GM12878 (cell line): ENCODE measurements at regions of chr12 and their contacts with region 1.

Region 1: GRCh38 chr12:53287741-53288216 is 7.6 kb upstream of the PFDN5 start:
- DNase-seq: peak; percentile 17
- ATAC-seq: peak; percentile 99
- H3K4me3 ChIP-seq: no peak overlapping the region
- H3K27ac ChIP-seq: no peak overlapping the region
- H3K4me1 ChIP-seq: no peaks in the 10 kb centered on the region
- H3K27me3 ChIP-seq: no peaks in the 10 kb centered on the region
- CTCF ChIP-seq: peak; percentile 76 to 80 (median 78)
- EP300 ChIP-seq: no peak
- POLR2A ChIP-seq: no peak
- RAD21 ChIP-seq: peak; percentile 84

Region 2: GRCh38 chr12:53226815-53227214 is 61.0 kb before region 1 on chr12:
- CTCF ChIA-PET with region 1: no interaction called
- POLR2A ChIA-PET with region 1: no interaction called
- RAD21 ChIA-PET with region 1: no interaction called
- SMC1A ChIA-PET with region 1: no interaction called
- in situ Hi-C with region 1: no loop called
- intact Hi-C with region 1: no loop called
- DNase-seq: no peak
- ATAC-seq: no peak
- H3K4me3 ChIP-seq: no peak overlapping the region
- H3K27ac ChIP-seq: no peak overlapping the region
- H3K4me1 ChIP-seq: peaks cover 10% of the 10 kb centered on the region
- H3K27me3 ChIP-seq: no peaks in the 10 kb centered on the region; a peak in 1 of 4 replicates
- CTCF ChIP-seq: no peak
- EP300 ChIP-seq: no peak
- POLR2A ChIP-seq: no peak
- RAD21 ChIP-seq: no peak

Region 3: GRCh38 chr12:53251477-53252348 is 36.1 kb before region 1 on chr12:
- CTCF ChIA-PET with region 1: interaction called, 18 read pairs
- POLR2A ChIA-PET with region 1: interaction called, 6 read pairs
- RAD21 ChIA-PET with region 1: interaction called, 3 read pairs
- SMC1A ChIA-PET with region 1: interaction called, 3 read pairs
- in situ Hi-C with region 1: no loop called
- intact Hi-C with region 1: no loop called
- DNase-seq: peak; percentile 24
- ATAC-seq: peak; percentile 92
- H3K4me3 ChIP-seq: peak overlapping the region; percentile 99
- H3K27ac ChIP-seq: peak overlapping the region; percentile 66
- H3K4me1 ChIP-seq: peaks cover 28% of the 10 kb centered on the region
- H3K27me3 ChIP-seq: no peaks in the 10 kb centered on the region
- CTCF ChIP-seq: peak; percentile 52 to 83 (median 64); a peak in 5 of 6 replicates
- EP300 ChIP-seq: no peak
- POLR2A ChIP-seq: peak; percentile 92
- RAD21 ChIP-seq: peak; percentile 83

Region 4: DNA sequence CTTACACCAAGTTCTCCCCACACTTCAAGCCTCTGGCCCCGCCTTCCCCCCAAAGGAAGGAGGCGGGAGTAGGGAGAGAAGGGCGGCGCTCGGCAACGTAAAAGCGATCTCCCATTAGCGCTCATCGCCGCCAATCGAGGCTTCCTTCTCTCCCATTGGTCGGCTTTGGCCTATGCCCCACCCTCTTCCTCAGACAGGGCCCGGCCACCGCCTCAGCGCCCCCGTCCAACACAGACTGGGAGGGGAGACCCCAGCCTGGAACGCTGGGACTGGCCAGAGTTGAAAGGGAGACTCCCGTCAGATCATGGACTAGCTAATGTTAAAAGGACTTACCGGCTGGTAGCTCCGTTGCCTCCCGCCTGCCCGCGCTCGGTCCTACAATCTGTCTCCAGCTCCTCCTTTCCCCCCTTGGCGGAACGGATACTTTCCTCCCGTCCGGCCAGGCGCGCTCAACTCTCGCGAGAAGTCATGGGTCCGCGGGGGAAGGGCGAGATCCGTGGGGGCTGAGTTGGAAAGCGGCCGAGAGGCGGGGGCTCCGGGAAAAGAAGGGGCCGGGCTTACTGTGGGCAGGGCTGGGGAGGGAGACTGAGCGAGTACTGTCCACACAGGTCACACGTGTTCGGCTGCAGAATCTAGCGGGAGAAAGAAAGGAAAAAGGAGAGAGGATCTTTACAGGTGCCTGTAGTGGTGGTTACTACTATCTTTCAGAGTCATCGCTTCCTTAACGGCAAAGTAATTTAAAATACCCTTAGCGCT is 338.3 kb after region 1 on chr12 and contains the start of gene ATF7:
- CTCF ChIA-PET with region 1: no interaction called
- POLR2A ChIA-PET with region 1: no interaction called
- RAD21 ChIA-PET with region 1: no interaction called
- SMC1A ChIA-PET with region 1: no interaction called
- in situ Hi-C with region 1: no loop called
- intact Hi-C with region 1: no loop called
- DNase-seq: peak; percentile 96
- ATAC-seq: peak; percentile 98
- H3K4me3 ChIP-seq: peak within 1 kb of the TSS; percentile 94
- H3K27ac ChIP-seq: peak within 1 kb of the TSS; percentile 96
- H3K4me1 ChIP-seq: no peaks in the 10 kb centered on the region
- H3K27me3 ChIP-seq: no peaks in the 10 kb centered on the region
- CTCF ChIP-seq: no peak
- EP300 ChIP-seq: 0 out of 4 replicates have a peak, but pooled peaks of 1 of the 2 experiments have one; percentile 23
- POLR2A ChIP-seq: peak; percentile 80
- RAD21 ChIP-seq: no peak
- polyA plus RNA-seq, gene ATF7: 21.8 to 26.8 TPM